Naive thymus-derived CD4-positive, alpha-beta T cell (primary cell): ENCODE measurements at regions of chr17 and their contacts with region 1.

Region 1: GRCh38 chr17:40399185-40399584 is 18.5 kb downstream of the TOP2A start:
- DNase-seq: peak in 6 of 9 donors; percentile 39 to 69 (median 60)
- ATAC-seq: peak; percentile 75
- H3K4me3 ChIP-seq: no peak overlapping the region
- H3K4me3 Mint-ChIP-seq: no peak overlapping the region
- H3K27ac ChIP-seq: no peak overlapping the region
- H3K27ac Mint-ChIP-seq: peak overlapping the region in 3 of 9 donors; percentile 6 to 65 (median 64)
- H3K4me1 ChIP-seq: no peaks in the 10 kb centered on the region
- H3K4me1 Mint-ChIP-seq: peaks cover 8 to 36% (median 22%) of the 10 kb centered on the region in 7 donors
- H3K27me3 ChIP-seq: no peaks in the 10 kb centered on the region
- H3K27me3 Mint-ChIP-seq: no peaks in the 10 kb centered on the region

Region 2: GRCh38 chr17:40340880-40341807 is 58.0 kb before region 1 on chr17:
- CTCF ChIA-PET with region 1: no interaction called
- POLR2A ChIA-PET with region 1: no interaction called
- intact Hi-C with region 1: no loop called
- DNase-seq: peak; percentile 78 to 92 (median 85)
- ATAC-seq: peak; percentile 88
- H3K4me3 ChIP-seq: peak overlapping the region; percentile 73
- H3K4me3 Mint-ChIP-seq: peak overlapping the region; percentile 71 to 89 (median 82)
- H3K27ac ChIP-seq: peak overlapping the region; percentile 90
- H3K27ac Mint-ChIP-seq: peak overlapping the region; percentile 84 to 98 (median 96)
- H3K4me1 ChIP-seq: peaks cover 53 to 54% of the 10 kb centered on the region in 2 donors
- H3K4me1 Mint-ChIP-seq: peaks cover 46 to 80% (median 72%) of the 10 kb centered on the region in 7 donors
- H3K27me3 ChIP-seq: no peaks in the 10 kb centered on the region
- H3K27me3 Mint-ChIP-seq: no peaks in the 10 kb centered on the region

Region 3: DNA sequence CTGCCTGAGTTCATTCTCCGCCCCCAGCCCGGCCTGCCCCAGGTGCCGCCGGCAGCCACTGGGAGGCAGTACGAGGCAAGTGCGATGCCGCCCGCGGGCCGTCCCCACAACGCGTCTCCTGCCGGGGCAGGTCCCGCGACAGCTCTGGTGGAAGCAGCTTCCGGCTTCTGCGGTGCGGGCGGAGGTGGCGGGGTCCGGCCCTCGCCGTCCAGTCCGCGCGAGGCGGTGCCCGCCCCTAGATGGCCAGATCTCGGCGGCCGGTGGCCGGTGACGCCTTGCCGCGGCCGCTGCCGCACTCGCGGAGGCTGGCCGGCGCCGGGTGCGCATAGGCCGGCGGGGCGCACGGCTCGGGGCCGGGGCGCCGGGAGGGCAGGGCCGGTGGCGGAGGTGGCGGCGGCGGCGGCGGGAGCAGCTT is 36.5 kb before region 1 on chr17:
- CTCF ChIA-PET with region 1: no interaction called
- POLR2A ChIA-PET with region 1: interaction called, 3 read pairs
- intact Hi-C with region 1: loop called (anchors 2 to 5 kb)
- DNase-seq: peak; percentile 60 to 90 (median 74)
- ATAC-seq: peak; percentile 88
- H3K4me3 ChIP-seq: peak overlapping the region; percentile 35
- H3K4me3 Mint-ChIP-seq: peak overlapping the region; percentile 10 to 87 (median 70)
- H3K27ac ChIP-seq: no peak overlapping the region
- H3K27ac Mint-ChIP-seq: peak overlapping the region in 1 of 9 donors; percentile 85
- H3K4me1 ChIP-seq: peaks cover 4 to 7% of the 10 kb centered on the region in 2 donors
- H3K4me1 Mint-ChIP-seq: peaks cover 4 to 37% (median 12%) of the 10 kb centered on the region in 7 donors
- H3K27me3 ChIP-seq: no peaks in the 10 kb centered on the region
- H3K27me3 Mint-ChIP-seq: peaks cover 0 to 23% (median 8%) of the 10 kb centered on the region in 5 donors

Region 4: DNA sequence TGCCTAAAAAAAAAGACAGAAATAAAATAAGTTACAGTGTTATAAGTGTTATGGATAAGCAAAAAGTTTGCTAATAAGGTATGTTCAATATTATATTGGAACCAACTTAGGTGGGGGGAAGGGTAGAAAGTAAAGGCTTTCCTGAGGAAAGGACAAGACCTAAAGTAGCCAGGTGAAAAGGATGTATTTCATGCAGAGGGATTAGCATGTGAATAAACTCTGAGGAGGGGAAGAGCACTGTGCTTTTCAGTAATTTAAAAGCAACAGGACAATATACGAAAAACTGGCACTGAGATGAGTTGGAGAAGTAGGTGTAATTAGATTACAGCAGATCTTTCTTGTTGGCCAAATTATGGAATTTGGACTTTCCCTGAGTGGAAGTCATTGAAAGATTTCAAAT is 10.9 kb after region 1 on chr17:
- CTCF ChIA-PET with region 1: interaction called, 13 read pairs
- POLR2A ChIA-PET with region 1: interaction called, 3 read pairs
- intact Hi-C with region 1: loop called (anchors 1 kb)
- DNase-seq: no peak
- ATAC-seq: no peak
- H3K4me3 ChIP-seq: no peak overlapping the region
- H3K4me3 Mint-ChIP-seq: no peak overlapping the region
- H3K27ac ChIP-seq: no peak overlapping the region
- H3K27ac Mint-ChIP-seq: peak overlapping the region in 2 of 9 donors; percentile 17 to 47
- H3K4me1 ChIP-seq: no peaks in the 10 kb centered on the region
- H3K4me1 Mint-ChIP-seq: peaks cover 0 to 39% (median 0%) of the 10 kb centered on the region in 7 donors
- H3K27me3 ChIP-seq: no peaks in the 10 kb centered on the region
- H3K27me3 Mint-ChIP-seq: no peaks in the 10 kb centered on the region

Region 5: GRCh38 chr17:40443583-40444327 is 44.6 kb after region 1 on chr17:
- CTCF ChIA-PET with region 1: interaction called, 6 read pairs
- POLR2A ChIA-PET with region 1: interaction called, 3 read pairs
- intact Hi-C with region 1: loop called (anchors 1 to 5 kb)
- DNase-seq: peak; percentile 40 to 80 (median 61)
- ATAC-seq: peak; percentile 87
- H3K4me3 ChIP-seq: peak overlapping the region; percentile 21
- H3K4me3 Mint-ChIP-seq: peak overlapping the region; percentile 65 to 90 (median 84)
- H3K27ac ChIP-seq: peak overlapping the region; percentile 1
- H3K27ac Mint-ChIP-seq: peak overlapping the region in 8 of 9 donors; percentile 60 to 93 (median 78)
- H3K4me1 ChIP-seq: peaks cover 25 to 27% of the 10 kb centered on the region in 2 donors
- H3K4me1 Mint-ChIP-seq: peaks cover 30 to 58% (median 33%) of the 10 kb centered on the region in 7 donors
- H3K27me3 ChIP-seq: no peaks in the 10 kb centered on the region
- H3K27me3 Mint-ChIP-seq: peaks cover 0 to 5% (median 0%) of the 10 kb centered on the region in 5 donors

Region 6: GRCh38 chr17:40536295-40537171 is 137.3 kb after region 1 on chr17:
- CTCF ChIA-PET with region 1: interaction called, 50 read pairs
- POLR2A ChIA-PET with region 1: interaction called, 30 read pairs
- intact Hi-C with region 1: loop called (anchors 1 kb)
- DNase-seq: peak in 1 of 9 donors; percentile 7
- ATAC-seq: no peak
- H3K4me3 ChIP-seq: no peak overlapping the region
- H3K4me3 Mint-ChIP-seq: peak overlapping the region in 6 of 10 donors; percentile 8 to 43 (median 23)
- H3K27ac ChIP-seq: no peak overlapping the region
- H3K27ac Mint-ChIP-seq: peak overlapping the region; percentile 77 to 99 (median 96)
- H3K4me1 ChIP-seq: peaks cover 68 to 81% of the 10 kb centered on the region in 2 donors
- H3K4me1 Mint-ChIP-seq: peaks cover 64 to 100% (median 94%) of the 10 kb centered on the region in 7 donors
- H3K27me3 ChIP-seq: no peaks in the 10 kb centered on the region
- H3K27me3 Mint-ChIP-seq: peaks cover 0 to 3% (median 0%) of the 10 kb centered on the region in 5 donors